Activated CD4-positive, alpha-beta memory T cell treated with anti-CD3 and anti-CD28 coated beads for 36 hours (primary cell): ENCODE measurements at regions of chr2 and their contacts with region 1.

Region 1: GRCh38 chr2:230160112-230160660 is 59.6 kb downstream of the SP110 start:
- DNase-seq: peak; percentile 69
- H3K4me3 Mint-ChIP-seq: no peak overlapping the region
- H3K27ac Mint-ChIP-seq: no peak overlapping the region
- H3K4me1 Mint-ChIP-seq: peaks cover 7% of the 10 kb centered on the region
- H3K27me3 Mint-ChIP-seq: no peaks in the 10 kb centered on the region

Region 2: DNA sequence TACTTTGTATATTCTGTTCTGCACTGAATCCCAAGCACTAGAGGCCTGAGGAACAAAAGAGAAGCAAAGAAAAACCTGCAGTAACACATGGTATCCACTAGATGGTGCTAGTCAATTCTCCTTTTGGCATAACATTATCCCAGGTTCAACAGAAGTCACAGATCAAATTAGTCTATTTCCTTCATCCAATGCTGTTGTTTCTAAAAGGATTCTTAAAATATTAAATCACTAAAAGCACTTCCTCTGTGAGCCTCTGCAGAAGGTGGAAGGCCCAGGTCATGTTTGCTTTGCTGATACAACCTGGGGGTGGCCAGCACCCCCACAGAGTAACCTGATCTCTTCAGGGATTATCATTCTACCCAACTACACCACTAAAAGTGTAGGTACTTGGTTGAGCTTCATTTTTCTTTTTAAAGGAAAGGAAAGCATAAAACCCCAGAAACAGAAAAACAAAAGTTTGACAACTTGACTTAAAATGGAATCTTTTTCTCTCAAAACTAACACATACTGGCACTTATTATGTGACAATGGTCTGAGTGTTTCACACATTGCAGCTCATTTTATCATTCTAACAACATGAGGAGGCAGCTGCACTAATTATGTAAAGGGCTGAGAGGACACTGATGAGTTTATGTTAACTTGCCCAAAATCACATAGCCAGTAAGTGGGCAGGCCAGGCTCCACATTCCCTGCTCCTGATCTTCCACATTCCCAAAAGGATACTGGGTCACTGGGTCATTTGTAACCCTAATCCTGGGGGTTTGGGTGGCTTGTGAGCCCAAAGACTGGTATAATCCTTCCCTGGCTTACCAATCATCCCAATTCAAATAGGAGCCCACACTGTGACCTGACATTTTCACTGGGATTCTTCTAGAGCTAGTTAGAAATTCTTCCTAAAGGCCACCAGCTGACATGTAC is 379.1 kb before region 1 on chr2:
- CTCF ChIA-PET with region 1: interaction called, 10 read pairs
- POLR2A ChIA-PET with region 1: no interaction called
- intact Hi-C with region 1: loop called (anchors 2 kb)
- DNase-seq: no peak
- H3K4me3 Mint-ChIP-seq: no peak overlapping the region
- H3K27ac Mint-ChIP-seq: peak overlapping the region; percentile 26
- H3K4me1 Mint-ChIP-seq: peaks cover 22% of the 10 kb centered on the region
- H3K27me3 Mint-ChIP-seq: no peaks in the 10 kb centered on the region

Region 3: GRCh38 chr2:230090967-230091366 is 69.2 kb before region 1 on chr2:
- CTCF ChIA-PET with region 1: no interaction called
- POLR2A ChIA-PET with region 1: no interaction called
- intact Hi-C with region 1: no loop called
- DNase-seq: no peak
- H3K4me3 Mint-ChIP-seq: no peak overlapping the region
- H3K27ac Mint-ChIP-seq: no peak overlapping the region
- H3K4me1 Mint-ChIP-seq: no peaks in the 10 kb centered on the region
- H3K27me3 Mint-ChIP-seq: peaks cover 10% of the 10 kb centered on the region

Region 4: GRCh38 chr2:230170532-230170931 is 10.3 kb after region 1 on chr2:
- CTCF ChIA-PET with region 1: interaction called, 30 read pairs
- POLR2A ChIA-PET with region 1: no interaction called
- intact Hi-C with region 1: no loop called
- DNase-seq: no peak
- H3K4me3 Mint-ChIP-seq: no peak overlapping the region
- H3K27ac Mint-ChIP-seq: no peak overlapping the region
- H3K4me1 Mint-ChIP-seq: peaks cover 7% of the 10 kb centered on the region
- H3K27me3 Mint-ChIP-seq: no peaks in the 10 kb centered on the region

Region 5: GRCh38 chr2:230219419-230220331 is 59.5 kb after region 1 on chr2 and contains the start of gene SP110:
- CTCF ChIA-PET with region 1: no interaction called
- POLR2A ChIA-PET with region 1: no interaction called
- intact Hi-C with region 1: no loop called
- DNase-seq: peak; percentile 90
- H3K4me3 Mint-ChIP-seq: peak within 1 kb of the TSS; percentile 92
- H3K27ac Mint-ChIP-seq: peak within 1 kb of the TSS; percentile 90
- H3K4me1 Mint-ChIP-seq: peaks cover 69% of the 10 kb centered on the region
- H3K27me3 Mint-ChIP-seq: no peaks in the 10 kb centered on the region
- total RNA-seq, gene SP110: 91.5 to 94.1 TPM

Region 6: DNA sequence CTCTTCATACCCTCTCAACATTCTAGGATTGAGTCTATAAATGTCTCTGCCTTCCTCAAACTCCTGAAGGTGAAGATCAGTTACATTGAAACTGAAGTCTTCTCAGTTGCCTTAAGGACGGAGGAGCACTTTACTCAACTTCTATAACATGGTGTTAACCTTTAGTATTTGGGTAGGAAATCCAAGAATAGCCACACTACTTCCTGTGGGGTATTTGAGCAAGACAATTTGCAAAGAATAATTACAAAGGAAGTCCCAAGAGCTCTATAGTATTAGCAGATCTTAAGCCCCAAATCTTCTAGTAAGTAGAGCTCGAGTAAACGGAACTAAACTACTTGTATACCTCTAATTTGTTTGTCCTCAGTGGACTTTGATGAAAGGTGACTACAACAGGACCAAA is 336.7 kb after region 1 on chr2:
- CTCF ChIA-PET with region 1: no interaction called
- POLR2A ChIA-PET with region 1: no interaction called
- intact Hi-C with region 1: no loop called
- DNase-seq: no peak
- H3K4me3 Mint-ChIP-seq: no peak overlapping the region
- H3K27ac Mint-ChIP-seq: no peak overlapping the region
- H3K4me1 Mint-ChIP-seq: peaks cover 16% of the 10 kb centered on the region
- H3K27me3 Mint-ChIP-seq: no peaks in the 10 kb centered on the region